Activated T-helper 2 cell treated with anti-CD3 and anti-CD28 coated beads, Interferon-gamma antibody, Interleukin-2, Interleukin-4, amounts not matched to agents 10 μg/mL and 5 μg/mL and 100 μg/mL, durations not matched to agents 14 hours and 24 hours and 36 hours (primary cell): ENCODE measurements at regions of chr4 and their contacts with region 1.

Region 1: GRCh38 chr4:88284439-88285234 is at the start of gene PPM1K:
- DNase-seq: peak; percentile 99
- H3K4me3 Mint-ChIP-seq: peak within 1 kb of the TSS; percentile 99
- H3K27ac Mint-ChIP-seq: peak within 1 kb of the TSS; percentile 100
- H3K4me1 Mint-ChIP-seq: peaks cover 38% of the 10 kb centered on the region
- H3K27me3 Mint-ChIP-seq: no peaks in the 10 kb centered on the region
- total RNA-seq, gene PPM1K: 38.5 and 39.9 TPM in 2 replicates

Region 2: DNA sequence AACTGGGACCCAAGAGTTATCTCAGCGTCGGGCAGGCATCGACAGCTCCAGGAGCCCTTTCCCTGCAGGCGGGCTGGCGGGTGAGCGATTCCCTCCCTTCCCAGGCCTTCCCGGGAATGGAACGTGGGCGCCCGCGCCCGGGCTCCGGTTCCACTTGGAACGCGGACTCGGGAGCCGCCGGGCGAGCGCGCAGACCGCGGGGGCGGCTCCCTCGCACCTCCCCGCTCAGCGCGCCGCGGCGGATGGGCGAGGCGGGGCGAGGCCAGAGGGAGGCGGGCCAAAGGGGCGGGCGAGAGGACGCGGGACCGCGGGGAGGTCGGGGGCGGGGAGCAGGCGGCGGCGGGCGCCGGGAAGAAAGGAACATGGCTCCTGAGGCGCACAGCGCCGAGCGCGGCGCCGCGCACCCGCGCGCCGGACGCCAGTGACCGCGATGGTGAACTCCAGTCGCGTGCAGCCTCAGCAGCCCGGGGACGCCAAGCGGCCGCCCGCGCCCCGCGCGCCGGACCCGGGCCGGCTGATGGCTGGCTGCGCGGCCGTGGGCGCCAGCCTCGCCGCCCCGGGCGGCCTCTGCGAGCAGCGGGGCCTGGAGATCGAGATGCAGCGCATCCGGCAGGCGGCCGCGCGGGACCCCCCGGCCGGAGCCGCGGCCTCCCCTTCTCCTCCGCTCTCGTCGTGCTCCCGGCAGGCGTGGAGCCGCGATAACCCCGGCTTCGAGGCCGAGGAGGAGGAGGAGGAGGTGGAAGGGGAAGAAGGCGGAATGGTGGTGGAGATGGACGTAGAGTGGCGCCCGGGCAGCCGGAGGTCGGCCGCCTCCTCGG is 277.1 kb before region 1 on chr4 and contains the start of gene PKD2:
- intact Hi-C with region 1: loop called (anchors 10 kb)
- DNase-seq: peak; percentile 80
- H3K4me3 Mint-ChIP-seq: peak within 1 kb of the TSS; percentile 91
- H3K27ac Mint-ChIP-seq: peak within 1 kb of the TSS; percentile 85
- H3K4me1 Mint-ChIP-seq: peaks cover 30% of the 10 kb centered on the region
- H3K27me3 Mint-ChIP-seq: peaks cover 15% of the 10 kb centered on the region
- total RNA-seq, gene PKD2: 13.6 and 16.6 TPM in 2 replicates

Region 3: GRCh38 chr4:88240297-88240714 is 44.3 kb before region 1 on chr4:
- intact Hi-C with region 1: no loop called
- DNase-seq: no peak
- H3K4me3 Mint-ChIP-seq: no peak overlapping the region
- H3K27ac Mint-ChIP-seq: no peak overlapping the region
- H3K4me1 Mint-ChIP-seq: peaks cover 4% of the 10 kb centered on the region
- H3K27me3 Mint-ChIP-seq: peaks cover 16% of the 10 kb centered on the region

Region 4: DNA sequence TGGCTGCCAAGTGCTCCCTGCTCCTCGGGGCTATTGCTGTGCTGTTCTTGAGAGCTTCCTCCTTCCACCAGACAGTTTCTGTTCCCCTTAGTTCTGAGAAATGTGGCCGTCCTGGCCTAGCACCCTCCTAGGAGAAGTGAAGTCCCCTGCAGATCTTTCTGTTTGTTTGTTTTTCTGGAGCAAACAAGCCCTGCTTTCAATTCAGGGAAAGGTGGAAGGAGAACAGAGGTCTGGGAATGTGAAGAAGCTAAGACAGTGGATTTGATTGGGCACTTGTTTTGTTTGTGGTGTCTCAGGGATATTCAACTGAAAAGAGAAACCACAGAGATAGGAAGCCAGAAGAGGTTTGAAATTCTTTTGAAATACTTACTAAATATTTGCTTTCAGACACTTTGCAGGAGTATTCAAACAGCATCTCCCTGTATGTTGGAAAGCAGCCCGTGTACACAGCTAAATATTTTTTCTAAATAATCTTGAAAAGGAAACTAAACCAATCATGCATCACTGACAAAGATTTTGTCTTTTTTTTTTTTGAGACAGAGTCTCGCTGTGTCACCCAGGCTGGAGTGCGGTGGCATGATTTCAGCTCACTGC is 36.2 kb after region 1 on chr4:
- intact Hi-C with region 1: loop called (anchors 2 kb)
- DNase-seq: peak; percentile 35
- H3K4me3 Mint-ChIP-seq: peak overlapping the region; percentile 75
- H3K27ac Mint-ChIP-seq: peak overlapping the region; percentile 85
- H3K4me1 Mint-ChIP-seq: peaks cover 26% of the 10 kb centered on the region
- H3K27me3 Mint-ChIP-seq: no peaks in the 10 kb centered on the region

Region 5: GRCh38 chr4:88456757-88457306 is 172.2 kb after region 1 on chr4 and contains the start of gene HERC5:
- intact Hi-C with region 1: loop called (anchors 1 kb)
- DNase-seq: peak; percentile 91
- H3K4me3 Mint-ChIP-seq: peak within 1 kb of the TSS; percentile 99
- H3K27ac Mint-ChIP-seq: peak within 1 kb of the TSS; percentile 100
- H3K4me1 Mint-ChIP-seq: peaks cover 26% of the 10 kb centered on the region
- H3K27me3 Mint-ChIP-seq: peaks cover 5% of the 10 kb centered on the region
- total RNA-seq, gene HERC5: 8.4 and 10.2 TPM in 2 replicates

Region 6: DNA sequence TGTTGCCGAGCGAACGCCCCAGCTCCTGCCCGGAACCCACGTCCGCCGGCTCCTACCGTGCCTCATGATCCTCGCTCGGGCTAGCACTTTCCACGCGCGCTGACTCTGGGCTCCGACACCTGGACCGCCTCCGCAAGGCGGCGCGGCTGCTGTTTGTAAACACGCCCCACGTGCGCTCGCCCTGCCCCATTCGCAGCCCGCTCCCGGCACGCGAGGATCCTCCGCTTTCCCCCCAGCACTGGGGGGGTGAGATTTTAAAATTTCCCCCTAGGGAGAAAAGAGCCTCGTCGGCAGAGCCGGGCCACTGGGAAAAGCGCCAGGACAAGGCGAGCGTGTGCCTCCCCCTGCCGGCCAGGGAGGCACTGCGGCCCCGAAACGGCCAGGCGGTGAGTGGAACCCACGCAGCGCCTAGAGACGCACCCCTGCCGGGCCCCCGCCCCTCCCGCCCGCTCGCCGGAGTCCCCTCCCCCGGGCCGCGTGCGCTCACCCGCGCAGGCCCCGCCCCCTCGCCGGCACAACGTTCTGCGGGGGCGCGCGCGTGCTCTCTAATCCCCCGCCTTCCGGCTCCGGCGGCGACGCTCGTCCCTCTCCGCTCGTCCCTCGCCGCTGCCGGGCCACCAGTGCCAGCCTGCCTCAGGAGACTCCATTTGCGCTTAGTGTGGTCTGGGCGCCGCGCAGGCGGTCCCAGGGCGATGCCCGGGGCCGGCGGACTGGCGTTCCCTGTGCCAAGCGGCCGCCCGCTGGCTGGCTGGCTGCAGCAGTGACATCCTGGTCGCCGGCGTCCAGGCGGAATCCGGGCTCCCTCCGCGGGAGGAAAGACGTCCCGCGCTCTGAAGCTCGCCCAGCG is 826.6 kb after region 1 on chr4 and contains the start of gene TIGD2:
- intact Hi-C with region 1: loop called (anchors 5 kb)
- DNase-seq: peak; percentile 80
- H3K4me3 Mint-ChIP-seq: peak within 1 kb of the TSS; percentile 84
- H3K27ac Mint-ChIP-seq: peak within 1 kb of the TSS; percentile 42
- H3K4me1 Mint-ChIP-seq: peaks cover 17% of the 10 kb centered on the region
- H3K27me3 Mint-ChIP-seq: peaks cover 22% of the 10 kb centered on the region
- total RNA-seq, gene TIGD2: 2.6 and 3.0 TPM in 2 replicates